ENCODE measurements at regions of chr13 and their contacts with region 1.

Region 1: GRCh38 chr13:81184556-81185265 is 843.8 kb upstream of the SPRY2 start:
- DNase-seq: peak; percentile 67 to 69
- H3K4me3 ChIP-seq: no peak overlapping the region
- H3K4me3 Mint-ChIP-seq: peak overlapping the region; percentile 14
- H3K27ac Mint-ChIP-seq: peak overlapping the region; percentile 31
- H3K4me1 ChIP-seq: peaks cover 37% of the 10 kb centered on the region
- H3K4me1 Mint-ChIP-seq: peaks cover 30% of the 10 kb centered on the region
- H3K27me3 ChIP-seq: no peaks in the 10 kb centered on the region
- H3K27me3 Mint-ChIP-seq: no peaks in the 10 kb centered on the region
- CTCF ChIP-seq: no peak

Region 2: GRCh38 chr13:81139987-81140386 is 44.7 kb before region 1 on chr13:
- CTCF ChIA-PET with region 1: no interaction called
- POLR2A ChIA-PET with region 1: no interaction called
- intact Hi-C with region 1: loop called (anchors 1 kb)
- DNase-seq: no peak
- H3K4me3 ChIP-seq: no peak overlapping the region
- H3K4me3 Mint-ChIP-seq: peak overlapping the region; percentile 14
- H3K27ac Mint-ChIP-seq: peak overlapping the region; percentile 85
- H3K4me1 ChIP-seq: peaks cover 83% of the 10 kb centered on the region
- H3K4me1 Mint-ChIP-seq: peaks cover 55% of the 10 kb centered on the region
- H3K27me3 ChIP-seq: no peaks in the 10 kb centered on the region
- H3K27me3 Mint-ChIP-seq: no peaks in the 10 kb centered on the region
- CTCF ChIP-seq: no peak

Region 3: DNA sequence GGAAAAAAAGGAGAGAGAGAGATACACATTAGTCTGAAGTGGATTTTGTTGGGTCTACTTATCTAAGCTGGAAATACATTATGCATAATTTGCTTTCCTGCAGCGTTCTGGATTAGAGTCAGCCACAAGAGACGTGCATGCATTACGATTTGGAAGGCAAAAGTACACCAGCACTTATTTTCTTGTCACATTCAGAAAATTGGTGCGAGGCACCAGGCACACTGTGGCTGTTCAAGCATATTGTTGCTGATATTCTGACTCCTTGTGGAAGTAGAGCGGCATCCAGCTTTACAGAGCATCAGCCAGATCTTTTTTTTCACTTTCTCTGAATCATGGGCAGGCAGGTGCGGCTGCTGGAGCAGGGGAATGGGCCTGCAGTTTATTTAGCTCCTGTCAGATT is 61.8 kb after region 1 on chr13:
- CTCF ChIA-PET with region 1: no interaction called
- POLR2A ChIA-PET with region 1: no interaction called
- intact Hi-C with region 1: loop called (anchors 1 kb)
- DNase-seq: no peak
- H3K4me3 ChIP-seq: no peak overlapping the region
- H3K4me3 Mint-ChIP-seq: no peak overlapping the region
- H3K27ac Mint-ChIP-seq: peak overlapping the region; percentile 4
- H3K4me1 ChIP-seq: no peaks in the 10 kb centered on the region
- H3K4me1 Mint-ChIP-seq: peaks cover 7% of the 10 kb centered on the region
- H3K27me3 ChIP-seq: no peaks in the 10 kb centered on the region
- H3K27me3 Mint-ChIP-seq: no peaks in the 10 kb centered on the region
- CTCF ChIP-seq: no peak